OCI-LY7 (cell line): ENCODE measurements at regions of chr22 and their contacts with region 1.

Region 1: DNA sequence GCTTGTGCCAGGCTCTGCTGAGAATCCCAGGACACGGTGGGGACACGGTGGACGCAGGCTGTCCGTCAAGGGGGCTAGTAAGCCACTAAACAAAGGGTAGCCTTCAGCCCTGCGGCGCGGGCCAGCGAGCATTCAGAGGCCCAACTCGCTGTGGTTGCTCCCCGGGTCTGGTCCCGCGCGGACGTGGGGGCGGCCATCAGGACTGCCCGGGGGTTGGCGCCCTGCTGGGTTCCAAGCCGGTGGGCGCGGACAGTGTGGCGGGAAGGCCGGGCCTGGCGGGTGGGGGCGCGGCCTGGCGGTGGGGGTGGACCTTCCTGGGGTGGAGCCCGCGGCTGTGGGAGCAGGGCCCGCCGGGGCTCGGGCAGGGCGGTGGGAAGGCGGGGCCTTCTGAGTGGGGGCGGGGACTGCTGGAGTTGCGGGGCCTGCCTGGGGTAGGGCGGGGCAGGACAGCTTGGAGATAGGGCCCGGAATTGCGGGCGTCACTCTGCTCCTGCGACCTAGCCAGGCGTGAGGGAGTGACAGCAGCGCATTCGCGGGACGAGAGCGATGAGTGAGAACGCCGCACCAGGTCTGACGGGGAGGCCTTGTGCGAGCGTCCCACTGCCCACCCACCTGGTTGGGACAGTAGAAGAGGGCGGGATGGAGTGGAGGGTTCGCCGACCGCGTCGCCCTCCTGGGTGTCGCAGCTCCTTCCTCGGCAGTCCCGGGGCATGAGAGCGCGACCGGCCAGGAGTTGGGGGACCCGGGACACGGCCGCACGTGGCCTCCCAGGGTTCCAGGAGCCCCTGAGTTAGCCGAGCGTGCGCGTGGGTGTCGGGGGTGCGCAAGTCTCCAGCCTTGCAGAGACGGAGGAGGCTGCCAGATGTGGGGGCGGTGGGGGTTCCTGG is at the start of gene SERHL2:
- DNase-seq: peak; percentile 87
- H3K4me3 ChIP-seq: peak within 1 kb of the TSS; percentile 70
- H3K27ac ChIP-seq: peak within 1 kb of the TSS; percentile 99
- H3K4me1 ChIP-seq: peaks cover 51% of the 10 kb centered on the region
- CTCF ChIP-seq: no peak
- total RNA-seq, gene SERHL2: 93.9 and 98.0 TPM in 2 replicates

Region 2: GRCh38 chr22:42444077-42444904 is 109.4 kb before region 1 on chr22:
- CTCF ChIA-PET with region 1: no interaction called
- POLR2A ChIA-PET with region 1: no interaction called
- intact Hi-C with region 1: loop called (anchors 5 kb)
- DNase-seq: peak; percentile 90
- H3K4me3 ChIP-seq: peak overlapping the region; percentile 65
- H3K27ac ChIP-seq: peak overlapping the region; percentile 70
- H3K4me1 ChIP-seq: peaks cover 64% of the 10 kb centered on the region
- CTCF ChIP-seq: peak; percentile 83

Region 3: GRCh38 chr22:42511401-42511891 is 42.3 kb before region 1 on chr22:
- CTCF ChIA-PET with region 1: no interaction called
- POLR2A ChIA-PET with region 1: no interaction called
- intact Hi-C with region 1: loop called (anchors 5 kb)
- DNase-seq: peak; percentile 53
- H3K4me3 ChIP-seq: no peak overlapping the region
- H3K27ac ChIP-seq: peak overlapping the region; percentile 68
- H3K4me1 ChIP-seq: peaks cover 49% of the 10 kb centered on the region
- CTCF ChIP-seq: no peak

Region 4: DNA sequence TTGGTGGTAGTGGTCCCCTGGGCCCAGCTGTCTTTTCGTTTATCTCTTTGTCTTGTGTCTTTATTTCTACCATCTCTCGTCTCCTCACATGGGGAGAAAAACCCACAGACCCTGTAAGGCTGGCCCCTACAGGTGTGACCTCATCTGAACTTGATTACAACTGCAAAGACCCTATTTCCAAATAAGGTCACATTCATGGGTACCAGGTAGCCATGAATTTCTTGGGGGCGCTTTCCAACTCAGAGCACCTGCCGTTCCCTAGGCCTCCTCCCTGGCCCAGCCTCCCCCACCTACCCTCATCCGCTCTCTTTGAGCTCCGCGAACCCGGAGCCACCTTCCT is 20.1 kb before region 1 on chr22:
- CTCF ChIA-PET with region 1: no interaction called
- POLR2A ChIA-PET with region 1: interaction called, 5 read pairs
- intact Hi-C with region 1: loop called (anchors 2 kb)
- DNase-seq: no peak
- H3K4me3 ChIP-seq: peak overlapping the region; percentile 59
- H3K27ac ChIP-seq: peak overlapping the region; percentile 93
- H3K4me1 ChIP-seq: peaks cover 94% of the 10 kb centered on the region
- CTCF ChIP-seq: no peak

Region 5: GRCh38 chr22:42604403-42604802 is 50.7 kb after region 1 on chr22:
- CTCF ChIA-PET with region 1: no interaction called
- POLR2A ChIA-PET with region 1: no interaction called
- intact Hi-C with region 1: no loop called
- DNase-seq: no peak
- H3K4me3 ChIP-seq: no peak overlapping the region
- H3K27ac ChIP-seq: no peak overlapping the region
- H3K4me1 ChIP-seq: no peaks in the 10 kb centered on the region
- CTCF ChIP-seq: no peak